Naive thymus-derived CD4-positive, alpha-beta T cell (primary cell): ENCODE measurements at regions of chr9 and their contacts with region 1.

Region 1: GRCh38 chr9:70413798-70414775 is at the start of gene KLF9:
- DNase-seq: peak; percentile 76 to 97 (median 96)
- ATAC-seq: peak; percentile 89
- H3K4me3 ChIP-seq: peak within 1 kb of the TSS; percentile 42
- H3K4me3 Mint-ChIP-seq: peak within 1 kb of the TSS; percentile 91 to 100 (median 96)
- H3K27ac ChIP-seq: peak within 1 kb of the TSS; percentile 99
- H3K27ac Mint-ChIP-seq: peak within 1 kb of the TSS; percentile 99 to 100 (median 100)
- H3K4me1 ChIP-seq: peaks cover 37 to 39% of the 10 kb centered on the region in 2 donors
- H3K4me1 Mint-ChIP-seq: peaks cover 12 to 63% (median 45%) of the 10 kb centered on the region in 7 donors
- H3K27me3 ChIP-seq: no peaks in the 10 kb centered on the region
- H3K27me3 Mint-ChIP-seq: peaks cover 0 to 3% (median 0%) of the 10 kb centered on the region in 5 donors
- total RNA-seq, gene KLF9: 12.6 to 96.7 (median 23.3) TPM

Region 2: DNA sequence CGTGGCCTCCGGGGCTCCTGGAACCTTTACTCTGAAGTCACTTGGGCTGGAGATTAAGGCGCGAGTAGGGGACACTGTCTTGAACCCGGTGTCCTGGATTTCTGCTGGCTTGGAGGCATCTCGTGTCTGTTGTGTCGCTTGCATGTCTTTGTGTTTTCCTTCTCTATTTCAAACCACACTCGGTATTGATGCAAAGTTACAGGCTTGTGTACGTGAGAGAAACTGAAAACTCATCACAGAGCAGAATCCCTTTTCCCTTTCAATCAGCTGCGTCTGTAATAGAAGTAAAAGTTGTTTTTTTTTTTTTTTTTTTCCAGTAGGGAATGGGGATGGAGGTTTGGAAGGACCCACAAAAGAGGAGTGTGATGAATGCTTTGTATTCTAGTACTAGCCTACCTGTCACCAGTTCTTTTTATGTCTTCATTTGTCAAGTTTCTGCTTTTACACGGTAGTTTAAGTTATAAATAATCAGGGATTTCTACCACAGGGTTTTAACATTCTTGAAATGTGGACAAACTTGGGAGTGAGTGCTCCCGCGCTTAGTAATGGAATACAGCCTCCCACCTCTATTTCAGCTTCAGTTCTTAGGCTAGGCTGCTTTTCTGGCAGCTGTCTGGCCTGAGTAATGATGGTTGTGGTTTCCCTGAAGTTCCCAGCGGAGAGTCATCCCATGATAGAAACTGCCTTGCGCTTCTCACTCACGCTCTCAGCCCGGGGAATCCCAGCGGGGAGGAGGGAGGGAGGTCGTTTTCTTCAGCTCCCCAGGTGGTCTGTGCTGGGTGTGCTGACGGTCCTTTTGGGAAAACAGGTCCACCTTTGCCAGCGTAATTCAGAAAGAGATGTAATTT is 1239.2 kb before region 1 on chr9:
- CTCF ChIA-PET with region 1: no interaction called
- POLR2A ChIA-PET with region 1: no interaction called
- intact Hi-C with region 1: loop called in 1 of 2 experiments (anchors 10 kb)
- DNase-seq: peak in 1 of 9 donors; percentile 69
- ATAC-seq: peak; percentile 57
- H3K4me3 ChIP-seq: peak overlapping the region; percentile 36
- H3K4me3 Mint-ChIP-seq: peak overlapping the region; percentile 76 to 92 (median 82)
- H3K27ac ChIP-seq: no peak overlapping the region
- H3K27ac Mint-ChIP-seq: peak overlapping the region in 1 of 9 donors; percentile 79
- H3K4me1 ChIP-seq: peaks cover 10 to 12% of the 10 kb centered on the region in 2 donors
- H3K4me1 Mint-ChIP-seq: peaks cover 25 to 60% (median 30%) of the 10 kb centered on the region in 7 donors
- H3K27me3 ChIP-seq: no peaks in the 10 kb centered on the region
- H3K27me3 Mint-ChIP-seq: peaks cover 15 to 43% (median 24%) of the 10 kb centered on the region in 5 donors

Region 3: DNA sequence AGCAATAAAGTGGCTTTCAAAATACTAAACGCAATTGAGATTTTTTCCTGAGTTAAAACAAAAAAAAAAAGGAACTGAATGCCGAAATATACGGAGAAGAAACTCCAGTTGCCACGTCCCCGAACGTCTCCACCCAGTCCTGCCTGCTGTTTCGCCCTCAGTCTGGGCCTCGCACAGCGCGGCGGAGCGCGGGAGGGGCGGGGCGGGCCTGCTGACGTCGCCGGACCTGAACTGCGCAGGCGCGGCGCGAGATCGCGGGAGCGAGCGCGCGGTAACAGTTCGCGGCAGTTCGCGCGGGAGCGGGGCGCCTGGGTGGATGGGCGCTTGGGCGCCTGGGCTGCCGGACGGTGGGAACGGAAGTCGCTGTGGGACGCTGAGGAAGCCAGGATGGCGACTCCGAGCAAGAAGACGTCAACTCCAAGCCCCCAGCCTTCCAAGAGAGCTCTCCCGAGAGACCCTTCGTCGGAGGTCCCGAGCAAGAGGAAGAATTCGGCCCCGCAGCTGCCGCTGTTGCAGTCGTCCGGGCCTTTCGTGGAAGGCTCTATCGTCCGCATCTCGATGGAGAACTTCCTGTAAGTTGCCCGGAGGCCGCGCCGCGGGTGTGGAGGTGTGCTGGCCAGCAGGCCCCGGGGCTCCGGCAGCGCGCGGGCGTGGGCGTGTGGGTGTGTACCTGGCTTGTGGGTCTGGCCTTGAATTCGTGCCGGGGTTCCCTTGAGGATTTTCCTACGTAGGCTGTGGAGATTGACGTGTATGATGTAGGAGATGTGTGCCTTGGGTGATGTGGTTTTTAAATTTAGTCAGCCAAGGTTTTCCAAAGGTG is 155.2 kb before region 1 on chr9 and contains the start of gene SMC5:
- CTCF ChIA-PET with region 1: no interaction called
- POLR2A ChIA-PET with region 1: interaction called, 12 read pairs
- intact Hi-C with region 1: loop called in 1 of 2 experiments (anchors 1 kb)
- DNase-seq: peak; percentile 81 to 94 (median 93)
- ATAC-seq: peak; percentile 95
- H3K4me3 ChIP-seq: peak within 1 kb of the TSS; percentile 96
- H3K4me3 Mint-ChIP-seq: peak within 1 kb of the TSS; percentile 87 to 95 (median 91)
- H3K27ac ChIP-seq: peak within 1 kb of the TSS; percentile 94
- H3K27ac Mint-ChIP-seq: peak within 1 kb of the TSS; percentile 93 to 99 (median 98)
- H3K4me1 ChIP-seq: peaks cover 24 to 34% of the 10 kb centered on the region in 2 donors
- H3K4me1 Mint-ChIP-seq: peaks cover 45 to 79% (median 69%) of the 10 kb centered on the region in 7 donors
- H3K27me3 ChIP-seq: no peaks in the 10 kb centered on the region
- H3K27me3 Mint-ChIP-seq: peaks cover 0 to 12% (median 0%) of the 10 kb centered on the region in 5 donors
- total RNA-seq, gene SMC5: 26.2 to 44.6 (median 36.1) TPM

Region 4: GRCh38 chr9:70392189-70392588 is 21.9 kb before region 1 on chr9:
- CTCF ChIA-PET with region 1: interaction called, 3 read pairs
- POLR2A ChIA-PET with region 1: interaction called, 40 read pairs
- intact Hi-C with region 1: loop called (anchors 1 to 2 kb)
- DNase-seq: no peak
- ATAC-seq: peak; percentile 64
- H3K4me3 ChIP-seq: no peak overlapping the region
- H3K4me3 Mint-ChIP-seq: peak overlapping the region in 8 of 10 donors; percentile 20 to 72 (median 46)
- H3K27ac ChIP-seq: no peak overlapping the region
- H3K27ac Mint-ChIP-seq: peak overlapping the region in 5 of 9 donors; percentile 4 to 76 (median 41)
- H3K4me1 ChIP-seq: peaks cover 13 to 64% of the 10 kb centered on the region in 2 donors
- H3K4me1 Mint-ChIP-seq: peaks cover 48 to 98% (median 88%) of the 10 kb centered on the region in 7 donors
- H3K27me3 ChIP-seq: no peaks in the 10 kb centered on the region
- H3K27me3 Mint-ChIP-seq: no peaks in the 10 kb centered on the region

Region 5: DNA sequence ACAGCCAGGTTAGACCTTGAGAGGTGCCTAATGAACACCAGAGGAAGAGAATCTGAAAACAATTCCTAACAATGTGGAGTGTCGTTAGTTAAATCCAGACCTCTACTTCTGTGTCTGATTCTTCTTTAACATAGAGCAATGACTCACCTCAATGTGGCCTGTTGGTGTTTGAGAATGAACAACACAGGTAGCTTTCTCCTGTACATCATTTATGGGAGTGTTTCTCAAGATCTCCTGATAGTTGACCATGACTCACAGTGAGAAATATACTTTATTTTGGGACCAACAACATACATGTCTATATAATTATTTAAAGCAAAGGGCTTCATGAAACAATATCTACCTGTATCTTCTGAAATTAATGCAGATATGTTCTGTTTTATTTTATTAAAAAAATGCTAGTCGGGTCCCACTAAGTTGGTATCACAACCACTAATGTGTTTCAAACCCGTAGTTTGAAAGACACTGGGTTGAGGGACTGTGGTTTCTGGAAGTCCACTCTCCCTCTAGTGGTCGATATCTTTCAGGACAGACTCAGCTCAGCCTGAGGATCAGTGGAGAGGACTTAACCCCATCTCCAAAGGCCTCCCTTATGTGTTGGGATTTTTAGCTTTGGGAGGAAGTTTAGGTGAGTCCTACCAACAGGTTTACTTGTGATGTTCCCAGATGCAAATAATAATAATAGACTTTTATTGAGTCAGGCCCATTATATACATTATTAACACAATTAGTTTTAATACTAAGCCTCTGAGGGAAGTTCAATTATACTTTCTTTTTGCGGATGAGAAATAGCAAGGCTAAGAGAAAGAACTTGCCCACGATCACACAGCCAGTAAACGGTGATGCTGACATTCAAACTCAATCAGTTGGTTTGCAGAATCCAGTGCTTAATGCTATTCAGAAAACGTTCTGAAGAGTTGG is 70.4 kb after region 1 on chr9:
- CTCF ChIA-PET with region 1: interaction called, 6 read pairs
- POLR2A ChIA-PET with region 1: interaction called, 7 read pairs
- intact Hi-C with region 1: loop called in 1 of 2 experiments (anchors 1 kb)
- DNase-seq: peak in 6 of 9 donors; percentile 13 to 38 (median 32)
- ATAC-seq: peak; percentile 85
- H3K4me3 ChIP-seq: no peak overlapping the region
- H3K4me3 Mint-ChIP-seq: no peak overlapping the region
- H3K27ac ChIP-seq: no peak overlapping the region
- H3K27ac Mint-ChIP-seq: peak overlapping the region in 1 of 9 donors; percentile 36
- H3K4me1 ChIP-seq: no peaks in the 10 kb centered on the region
- H3K4me1 Mint-ChIP-seq: peaks cover 4 to 26% (median 13%) of the 10 kb centered on the region in 7 donors
- H3K27me3 ChIP-seq: no peaks in the 10 kb centered on the region
- H3K27me3 Mint-ChIP-seq: peaks cover 0 to 10% (median 0%) of the 10 kb centered on the region in 5 donors

Region 6: DNA sequence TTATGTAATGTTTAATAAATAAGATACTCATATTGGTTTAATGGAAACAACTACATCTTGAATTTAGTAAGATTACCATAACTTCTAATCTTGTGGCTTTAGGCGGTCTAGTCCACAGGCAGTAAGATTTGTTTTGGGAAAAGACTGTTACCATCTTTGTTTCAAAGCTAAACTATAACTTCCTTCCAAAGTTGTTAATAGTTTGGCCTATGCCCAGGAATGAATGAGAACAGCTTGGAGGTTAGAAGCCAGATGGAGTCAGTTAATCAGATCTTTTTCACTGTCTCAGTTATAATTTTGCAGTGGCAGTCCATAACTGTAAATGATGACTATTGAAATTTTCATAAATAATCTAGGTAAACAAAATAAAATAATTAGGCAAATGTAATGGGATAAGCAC is 242.2 kb after region 1 on chr9:
- CTCF ChIA-PET with region 1: no interaction called
- POLR2A ChIA-PET with region 1: no interaction called
- intact Hi-C with region 1: no loop called
- DNase-seq: no peak
- ATAC-seq: no peak
- H3K4me3 ChIP-seq: no peak overlapping the region
- H3K4me3 Mint-ChIP-seq: no peak overlapping the region
- H3K27ac ChIP-seq: no peak overlapping the region
- H3K27ac Mint-ChIP-seq: no peak overlapping the region
- H3K4me1 ChIP-seq: no peaks in the 10 kb centered on the region
- H3K4me1 Mint-ChIP-seq: no peaks in the 10 kb centered on the region
- H3K27me3 ChIP-seq: no peaks in the 10 kb centered on the region
- H3K27me3 Mint-ChIP-seq: peaks cover 6 to 17% (median 13%) of the 10 kb centered on the region in 5 donors

Region 7: GRCh38 chr9:71783120-71783530 is 1369.0 kb after region 1 on chr9:
- CTCF ChIA-PET with region 1: no interaction called
- POLR2A ChIA-PET with region 1: interaction called, 3 read pairs
- intact Hi-C with region 1: loop called in 1 of 2 experiments (anchors 5 kb)
- DNase-seq: peak; percentile 60 to 93 (median 90)
- ATAC-seq: peak; percentile 98
- H3K4me3 ChIP-seq: peak overlapping the region; percentile 18
- H3K4me3 Mint-ChIP-seq: peak overlapping the region; percentile 62 to 82 (median 76)
- H3K27ac ChIP-seq: peak overlapping the region; percentile 85
- H3K27ac Mint-ChIP-seq: peak overlapping the region; percentile 94 to 100 (median 99)
- H3K4me1 ChIP-seq: peaks cover 38% of the 10 kb centered on the region in 2 donors
- H3K4me1 Mint-ChIP-seq: peaks cover 20 to 58% (median 53%) of the 10 kb centered on the region in 7 donors
- H3K27me3 ChIP-seq: no peaks in the 10 kb centered on the region
- H3K27me3 Mint-ChIP-seq: no peaks in the 10 kb centered on the region

Region 8: GRCh38 chr9:72364679-72365524 is 1950.8 kb after region 1 on chr9 and contains the start of gene ZFAND5:
- CTCF ChIA-PET with region 1: no interaction called
- POLR2A ChIA-PET with region 1: interaction called, 7 read pairs
- intact Hi-C with region 1: loop called (anchors 5 kb)
- DNase-seq: peak; percentile 88 to 93 (median 90)
- ATAC-seq: peak; percentile 90
- H3K4me3 ChIP-seq: peak within 1 kb of the TSS; percentile 89
- H3K4me3 Mint-ChIP-seq: peak within 1 kb of the TSS; percentile 91 to 99 (median 96)
- H3K27ac ChIP-seq: peak within 1 kb of the TSS; percentile 94
- H3K27ac Mint-ChIP-seq: peak within 1 kb of the TSS; percentile 97 to 99 (median 99)
- H3K4me1 ChIP-seq: peaks cover 24 to 30% of the 10 kb centered on the region in 2 donors
- H3K4me1 Mint-ChIP-seq: peaks cover 16 to 47% (median 44%) of the 10 kb centered on the region in 7 donors
- H3K27me3 ChIP-seq: no peaks in the 10 kb centered on the region
- H3K27me3 Mint-ChIP-seq: no peaks in the 10 kb centered on the region
- total RNA-seq, gene ZFAND5: 82.4 to 466 (median 155) TPM